Panc1 (cell line): ENCODE measurements at regions of chr10 and their contacts with region 1.

Region 1: DNA sequence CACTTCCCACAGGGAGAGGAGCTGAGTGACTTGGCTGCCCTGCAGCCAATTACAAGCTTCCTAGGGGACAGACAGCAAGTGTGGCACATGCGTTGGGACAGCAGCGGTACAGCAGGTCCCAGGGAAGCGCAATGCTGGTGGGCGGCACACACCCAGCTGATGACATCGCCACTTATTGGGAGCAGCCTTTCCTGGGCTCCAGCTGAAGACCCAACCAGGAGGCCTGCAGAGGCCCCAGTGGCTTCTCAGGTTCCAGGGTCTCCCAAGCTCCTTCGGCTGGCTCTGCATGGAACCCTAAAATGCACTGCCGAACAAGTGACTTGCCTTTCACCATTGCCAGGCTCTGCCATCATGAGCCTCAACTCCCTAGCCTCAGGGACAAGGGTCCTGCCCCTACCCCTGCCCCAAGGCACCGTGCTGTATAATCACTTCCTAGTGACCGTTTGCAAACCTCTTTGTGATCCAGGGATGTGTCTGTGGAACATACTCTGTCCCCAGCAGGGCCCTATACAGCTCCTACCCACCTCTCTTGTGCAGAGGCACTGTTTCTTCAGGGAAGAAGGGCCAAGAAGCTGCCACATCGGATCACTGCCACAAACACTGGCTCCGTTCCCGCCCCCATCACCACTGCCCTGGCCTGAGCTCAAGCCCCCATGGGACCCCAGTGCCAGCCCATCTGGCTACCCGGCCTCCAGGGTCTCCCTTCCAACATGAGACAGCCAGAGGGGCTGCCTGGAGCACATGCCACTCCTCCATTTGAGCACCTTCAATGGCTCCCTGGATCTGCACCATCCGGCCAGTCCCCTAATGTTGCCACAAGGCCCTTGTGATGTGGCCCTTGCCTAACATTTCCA is 19.3 kb upstream of the SLIT1 start:
- DNase-seq: no peak
- ATAC-seq: no peak
- H3K4me3 ChIP-seq: no peak overlapping the region
- H3K27ac ChIP-seq: no peak overlapping the region
- H3K4me1 ChIP-seq: peaks cover 4% of the 10 kb centered on the region; the same call in 1 of the 2 replicates
- H3K27me3 ChIP-seq: no peaks in the 10 kb centered on the region
- CTCF ChIP-seq: no peak

Region 2: GRCh38 chr10:96586419-96587263 is 618.4 kb before region 1 on chr10 and contains the start of gene TM9SF3:
- CTCF ChIA-PET with region 1: no interaction called
- POLR2A ChIA-PET with region 1: no interaction called
- in situ Hi-C with region 1: no loop called
- intact Hi-C with region 1: no loop called
- DNase-seq: no peak
- ATAC-seq: peak; percentile 96
- H3K4me3 ChIP-seq: peak within 1 kb of the TSS; percentile 93 to 97
- H3K27ac ChIP-seq: peak within 1 kb of the TSS; percentile 100
- H3K4me1 ChIP-seq: peaks cover 34% of the 10 kb centered on the region
- H3K27me3 ChIP-seq: no peaks in the 10 kb centered on the region
- CTCF ChIP-seq: peak; percentile 16
- total RNA-seq, gene TM9SF3: 179 TPM

Region 3: DNA sequence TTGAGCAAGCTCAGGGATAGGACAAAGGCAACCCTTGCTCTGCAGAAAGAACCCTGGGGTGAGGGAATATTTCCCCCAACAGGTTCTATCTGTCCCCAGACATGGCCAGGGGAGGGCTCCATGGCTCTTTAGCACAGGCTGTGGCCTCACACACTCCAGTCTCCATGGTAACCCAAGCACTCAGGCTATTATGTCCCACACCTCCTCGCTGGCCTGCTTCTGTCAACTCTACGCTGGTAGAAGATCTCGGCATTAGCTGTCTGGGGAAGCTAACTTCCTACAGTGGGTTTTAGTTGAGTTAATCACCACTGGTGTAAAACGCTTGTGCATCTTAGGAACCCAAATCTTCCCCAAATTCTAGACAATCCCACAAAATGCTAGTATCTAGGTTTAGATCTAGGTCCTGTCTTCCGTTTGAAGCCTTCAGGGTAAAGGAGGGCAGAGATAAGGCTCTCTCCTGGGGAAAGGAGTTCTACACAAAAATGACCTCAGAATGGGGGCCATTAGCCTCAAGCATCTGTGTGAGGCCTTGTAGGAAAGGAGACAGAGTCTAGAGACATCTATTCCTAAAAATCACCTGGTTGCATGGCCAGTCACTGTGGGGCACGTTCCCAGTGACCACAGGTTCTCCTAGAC is 17.4 kb after region 1 on chr10:
- CTCF ChIA-PET with region 1: interaction called, 7 read pairs
- POLR2A ChIA-PET with region 1: interaction called, 11 read pairs
- in situ Hi-C with region 1: no loop called
- intact Hi-C with region 1: no loop called
- DNase-seq: no peak
- ATAC-seq: no peak
- H3K4me3 ChIP-seq: no peak overlapping the region
- H3K27ac ChIP-seq: no peak overlapping the region
- H3K4me1 ChIP-seq: no peaks in the 10 kb centered on the region
- H3K27me3 ChIP-seq: no peaks in the 10 kb centered on the region
- CTCF ChIP-seq: no peak